Upper lobe of right lung (tissue), 1 donor: ENCODE measurements at regions of chr10 and their contacts with region 1.

Region 1: GRCh38 chr10:6144406-6145165 is 55.8 kb downstream of the RBM17 start:
- DNase-seq: peak; percentile 96
- ATAC-seq: peak; percentile 95
- H3K4me3 ChIP-seq: peak overlapping the region; percentile 79
- H3K27ac ChIP-seq: peak overlapping the region; percentile 84
- H3K4me1 ChIP-seq: peaks cover 16% of the 10 kb centered on the region
- H3K27me3 ChIP-seq: no peaks in the 10 kb centered on the region
- CTCF ChIP-seq: no peak

Region 2: DNA sequence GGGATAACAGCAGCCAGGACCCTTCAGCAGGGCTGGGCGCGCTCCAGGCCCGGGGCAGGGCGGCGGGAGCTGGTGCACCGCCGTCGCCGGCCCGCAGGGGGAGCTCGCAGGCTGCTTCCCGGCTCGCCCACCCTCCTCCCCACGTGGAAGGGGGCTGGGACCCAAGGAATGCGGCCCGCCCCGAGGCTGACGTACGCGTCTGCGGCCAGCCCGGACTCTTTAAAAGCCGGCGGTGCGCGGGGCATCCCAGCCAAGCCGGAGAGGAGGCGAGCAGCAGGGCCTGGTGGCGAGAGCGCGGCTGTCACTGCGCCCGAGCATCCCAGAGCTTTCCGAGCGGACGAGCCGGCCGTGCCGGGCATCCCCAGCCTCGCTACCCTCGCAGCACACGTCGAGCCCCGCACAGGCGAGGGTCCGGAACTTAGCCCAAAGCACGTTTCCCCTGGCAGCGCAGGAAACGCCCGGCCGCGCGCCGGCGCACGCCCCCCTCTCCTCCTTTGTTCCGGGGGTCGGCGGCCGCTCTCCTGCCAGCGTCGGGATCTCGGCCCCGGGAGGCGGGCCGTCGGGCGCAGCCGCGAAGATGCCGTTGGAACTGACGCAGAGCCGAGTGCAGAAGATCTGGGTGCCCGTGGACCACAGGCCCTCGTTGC is 58.2 kb after region 1 on chr10 and contains the start of gene PFKFB3:
- intact Hi-C with region 1: loop called (anchors 10 kb)
- DNase-seq: peak; percentile 98
- ATAC-seq: peak; percentile 94
- H3K4me3 ChIP-seq: peak within 1 kb of the TSS; percentile 88
- H3K27ac ChIP-seq: peak within 1 kb of the TSS; percentile 92
- H3K4me1 ChIP-seq: peaks cover 25% of the 10 kb centered on the region
- H3K27me3 ChIP-seq: no peaks in the 10 kb centered on the region
- CTCF ChIP-seq: peak; percentile 98
- total RNA-seq, gene PFKFB3: 77.2 TPM

Region 3: DNA sequence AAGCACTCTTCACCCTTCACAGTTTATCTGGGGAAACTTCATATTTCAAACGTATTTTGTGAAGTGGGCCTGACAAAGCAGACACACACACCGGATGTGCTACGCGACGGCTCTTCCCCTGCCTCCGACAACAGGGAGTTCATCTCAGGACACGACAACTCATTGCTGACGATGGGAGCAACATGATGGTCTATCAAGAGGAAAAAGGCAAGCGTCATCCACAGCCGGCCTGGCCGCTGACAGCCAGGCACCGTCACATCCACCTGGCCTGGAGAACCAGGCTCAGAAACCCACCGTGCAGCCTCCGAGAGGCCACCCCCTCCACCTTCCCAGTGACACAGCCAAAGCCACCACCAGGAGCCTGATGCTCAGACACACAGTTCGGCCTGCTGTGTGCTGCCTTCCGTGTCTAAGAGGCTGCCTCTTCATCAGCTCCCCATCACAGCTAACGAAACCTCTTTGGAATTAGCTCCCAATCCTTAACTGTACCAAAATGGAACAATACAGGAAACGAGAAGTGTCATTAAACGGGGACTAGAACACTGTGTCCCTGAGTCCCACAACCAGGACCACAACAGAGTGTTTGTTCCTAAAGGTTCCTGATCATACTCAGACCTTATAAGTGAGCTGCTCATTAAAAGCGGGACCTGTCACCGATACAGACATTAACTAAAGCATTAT is 1189.5 kb after region 1 on chr10:
- intact Hi-C with region 1: no loop called
- DNase-seq: no peak
- ATAC-seq: peak; percentile 12
- H3K4me3 ChIP-seq: no peak overlapping the region
- H3K27ac ChIP-seq: no peak overlapping the region
- H3K4me1 ChIP-seq: no peaks in the 10 kb centered on the region
- H3K27me3 ChIP-seq: no peaks in the 10 kb centered on the region
- CTCF ChIP-seq: no peak